Endothelial cell of umbilical vein (primary cell): ENCODE measurements at regions of chr18 and their contacts with region 1.

Region 1: GRCh38 chr18:1075322-1075721 is 170.7 kb downstream of the ADCYAP1 start:
- DNase-seq: no peak
- H3K4me3 ChIP-seq: no peak overlapping the region
- H3K27ac ChIP-seq: no peak overlapping the region
- H3K4me1 ChIP-seq: no peaks in the 10 kb centered on the region
- H3K27me3 ChIP-seq: peaks cover under 1 to 3% of the 10 kb centered on the region in 2 experiments
- CTCF ChIP-seq: no peak
- POLR2A ChIP-seq: no peak

Region 2: DNA sequence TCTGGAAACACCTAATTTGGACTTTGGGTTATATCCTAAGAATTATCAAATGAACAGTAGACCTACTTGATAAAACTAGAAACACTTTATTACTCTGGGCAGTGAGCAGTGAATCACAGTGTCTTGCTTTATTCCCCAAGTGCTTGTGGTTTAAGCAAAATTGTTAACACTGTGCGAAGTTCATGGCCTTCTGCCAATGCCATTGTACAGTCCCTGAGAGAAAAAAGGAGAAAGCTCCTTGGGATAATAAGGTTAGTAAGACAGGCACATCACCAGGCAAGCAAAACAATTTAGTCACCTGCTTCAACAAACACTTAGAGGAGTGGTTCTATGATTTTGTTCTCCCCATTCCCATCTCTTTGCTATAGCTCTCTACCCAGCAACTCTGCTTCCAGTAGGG is 130.9 kb before region 1 on chr18:
- CTCF ChIA-PET with region 1: no interaction called
- POLR2A ChIA-PET with region 1: no interaction called
- dilution Hi-C with region 1: no loop called
- intact Hi-C with region 1: no loop called
- DNase-seq: no peak
- H3K4me3 ChIP-seq: no peak overlapping the region
- H3K27ac ChIP-seq: no peak overlapping the region
- H3K4me1 ChIP-seq: no peaks in the 10 kb centered on the region
- H3K27me3 ChIP-seq: peaks cover 0 to 2% of the 10 kb centered on the region in 2 experiments
- CTCF ChIP-seq: no peak
- POLR2A ChIP-seq: no peak

Region 3: GRCh38 chr18:980586-980985 is 94.7 kb before region 1 on chr18:
- CTCF ChIA-PET with region 1: no interaction called
- POLR2A ChIA-PET with region 1: no interaction called
- dilution Hi-C with region 1: no loop called
- intact Hi-C with region 1: no loop called
- DNase-seq: no peak
- H3K4me3 ChIP-seq: no peak overlapping the region
- H3K27ac ChIP-seq: no peak overlapping the region
- H3K4me1 ChIP-seq: no peaks in the 10 kb centered on the region
- H3K27me3 ChIP-seq: no peaks in the 10 kb centered on the region
- CTCF ChIP-seq: no peak
- POLR2A ChIP-seq: no peak

Region 4: GRCh38 chr18:1034971-1035370 is 40.4 kb before region 1 on chr18:
- CTCF ChIA-PET with region 1: no interaction called
- POLR2A ChIA-PET with region 1: interaction called, 10 read pairs
- dilution Hi-C with region 1: no loop called
- intact Hi-C with region 1: no loop called
- DNase-seq: no peak
- H3K4me3 ChIP-seq: no peak overlapping the region
- H3K27ac ChIP-seq: no peak overlapping the region
- H3K4me1 ChIP-seq: no peaks in the 10 kb centered on the region
- H3K27me3 ChIP-seq: no peaks in the 10 kb centered on the region
- CTCF ChIP-seq: no peak
- POLR2A ChIP-seq: no peak

Region 5: GRCh38 chr18:1094409-1094808 is 19.1 kb after region 1 on chr18:
- CTCF ChIA-PET with region 1: no interaction called
- POLR2A ChIA-PET with region 1: no interaction called
- dilution Hi-C with region 1: no loop called
- intact Hi-C with region 1: no loop called
- DNase-seq: no peak
- H3K4me3 ChIP-seq: no peak overlapping the region
- H3K27ac ChIP-seq: no peak overlapping the region
- H3K4me1 ChIP-seq: no peaks in the 10 kb centered on the region
- H3K27me3 ChIP-seq: no peaks in the 10 kb centered on the region
- CTCF ChIP-seq: no peak
- POLR2A ChIP-seq: no peak